B cell (primary cell): ENCODE measurements at regions of chr1 and their contacts with region 1.

Region 1: DNA sequence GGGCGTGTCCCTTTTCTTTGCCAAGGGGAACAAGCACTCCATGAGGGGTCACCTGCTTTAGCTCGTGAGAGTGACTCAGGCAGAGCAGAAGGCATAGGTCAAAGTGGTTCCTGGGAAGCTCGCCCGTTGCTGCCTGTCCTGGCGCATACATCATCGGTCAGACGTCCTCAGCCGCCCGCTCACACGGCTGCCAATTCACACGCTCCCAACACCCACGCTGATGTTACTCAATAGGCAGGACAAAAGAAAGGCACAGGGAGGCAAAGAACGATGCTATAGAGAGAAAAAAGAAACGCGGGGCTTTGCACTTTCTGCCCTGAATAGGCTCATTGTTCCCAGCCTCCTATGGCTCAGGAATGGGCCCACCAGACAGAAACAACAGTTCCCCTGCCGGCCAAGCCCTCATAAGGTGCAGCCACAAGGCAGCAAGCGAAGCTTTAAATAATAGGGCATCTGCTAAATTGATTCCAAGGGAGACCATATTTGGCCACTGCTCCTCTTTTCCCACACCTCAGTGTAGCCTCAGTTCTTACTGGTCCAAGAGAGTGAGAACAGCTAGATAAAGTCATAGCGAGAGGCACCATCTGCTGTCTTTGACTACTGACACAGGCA is 38.7 kb downstream of the VTCN1 start:
- DNase-seq: no peak
- ATAC-seq: no peak
- H3K4me3 ChIP-seq: no peak overlapping the region
- H3K4me3 Mint-ChIP-seq: no peak overlapping the region
- H3K27ac ChIP-seq: no peak overlapping the region
- H3K27ac Mint-ChIP-seq: no peak overlapping the region
- H3K4me1 ChIP-seq: no peaks in the 10 kb centered on the region
- H3K4me1 Mint-ChIP-seq: no peaks in the 10 kb centered on the region
- H3K27me3 ChIP-seq: no peaks in the 10 kb centered on the region
- H3K27me3 Mint-ChIP-seq: peaks cover 4% of the 10 kb centered on the region
- CTCF ChIP-seq: no peak

Region 2: DNA sequence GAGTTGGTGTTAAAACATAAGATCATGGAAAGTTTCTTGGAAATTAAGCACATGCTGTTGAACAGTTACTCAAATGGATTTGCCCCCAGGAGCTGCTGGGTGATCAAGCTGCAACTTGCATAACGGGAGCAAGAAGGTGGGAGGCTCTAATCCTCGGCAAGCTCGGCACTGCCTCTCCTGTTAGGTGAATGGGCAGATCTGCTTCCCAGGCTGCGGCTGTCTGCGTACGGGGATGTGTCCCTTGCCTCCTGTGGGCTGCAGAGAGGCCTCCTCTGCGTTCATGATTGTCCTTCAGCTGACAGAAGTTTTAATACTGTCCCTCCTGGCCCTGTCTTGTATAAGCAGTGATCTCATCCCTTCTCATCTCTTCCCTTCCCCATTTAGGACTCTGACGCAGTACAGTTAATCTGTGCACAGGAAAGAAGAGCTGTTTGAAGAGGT is 762.2 kb before region 1 on chr1:
- CTCF ChIA-PET with region 1: no interaction called
- POLR2A ChIA-PET with region 1: no interaction called
- intact Hi-C with region 1: no loop called
- DNase-seq: no peak
- ATAC-seq: no peak
- H3K4me3 ChIP-seq: no peak overlapping the region
- H3K4me3 Mint-ChIP-seq: no peak overlapping the region
- H3K27ac ChIP-seq: no peak overlapping the region
- H3K27ac Mint-ChIP-seq: no peak overlapping the region
- H3K4me1 ChIP-seq: no peaks in the 10 kb centered on the region
- H3K4me1 Mint-ChIP-seq: peaks cover 3% of the 10 kb centered on the region
- H3K27me3 ChIP-seq: no peaks in the 10 kb centered on the region
- H3K27me3 Mint-ChIP-seq: no peaks in the 10 kb centered on the region
- CTCF ChIP-seq: no peak

Region 3: GRCh38 chr1:116806245-116806644 is 365.8 kb before region 1 on chr1:
- CTCF ChIA-PET with region 1: no interaction called
- POLR2A ChIA-PET with region 1: no interaction called
- intact Hi-C with region 1: no loop called
- DNase-seq: no peak
- ATAC-seq: no peak
- H3K4me3 ChIP-seq: no peak overlapping the region
- H3K4me3 Mint-ChIP-seq: no peak overlapping the region
- H3K27ac ChIP-seq: no peak overlapping the region
- H3K27ac Mint-ChIP-seq: no peak overlapping the region
- H3K4me1 ChIP-seq: no peaks in the 10 kb centered on the region
- H3K4me1 Mint-ChIP-seq: no peaks in the 10 kb centered on the region
- H3K27me3 ChIP-seq: no peaks in the 10 kb centered on the region
- H3K27me3 Mint-ChIP-seq: no peaks in the 10 kb centered on the region
- CTCF ChIP-seq: no peak

Region 4: DNA sequence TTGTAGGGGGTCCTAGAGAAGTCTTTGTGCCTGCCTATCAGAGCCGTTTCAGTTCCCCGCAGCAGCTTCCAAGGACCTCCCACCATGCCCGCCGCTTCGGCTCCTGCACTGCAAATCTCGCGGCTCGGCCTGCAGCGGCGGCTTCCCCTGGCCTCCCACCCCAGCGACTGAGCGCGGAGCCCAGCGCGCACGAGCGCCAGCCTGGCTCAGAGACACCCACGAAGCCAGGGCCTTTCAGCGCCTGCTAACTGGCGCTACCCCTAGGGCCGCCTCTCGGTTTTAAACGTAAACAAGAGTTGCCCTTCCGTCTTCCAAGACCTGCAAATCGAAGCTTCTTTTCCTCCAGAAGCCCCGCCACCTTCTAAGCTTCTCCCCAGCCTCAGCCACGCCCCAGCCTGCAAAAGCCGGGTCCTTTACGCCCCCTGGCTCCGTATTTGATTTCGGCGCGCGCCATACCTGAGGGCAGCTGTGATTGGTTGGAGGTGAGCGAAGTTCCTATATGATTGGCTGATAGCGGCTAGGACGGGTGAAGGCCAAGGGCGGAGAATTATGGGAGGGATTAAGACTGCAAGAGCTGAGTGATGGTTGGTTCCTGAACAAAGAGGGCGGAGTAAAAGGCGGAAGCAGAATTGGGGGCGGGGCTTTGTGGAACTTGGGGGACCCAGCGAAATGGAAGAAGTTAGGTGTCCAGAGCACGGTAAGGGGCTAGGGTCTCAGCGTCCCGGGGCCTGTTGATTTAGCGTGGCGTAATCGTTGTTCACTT is 112.1 kb before region 1 on chr1 and contains the start of gene TTF2:
- CTCF ChIA-PET with region 1: no interaction called
- POLR2A ChIA-PET with region 1: no interaction called
- intact Hi-C with region 1: no loop called
- DNase-seq: peak; percentile 98
- ATAC-seq: peak; percentile 96
- H3K4me3 ChIP-seq: peak within 1 kb of the TSS; percentile 71 to 95 (median 79)
- H3K4me3 Mint-ChIP-seq: no peak within 1 kb of the TSS
- H3K27ac ChIP-seq: peak within 1 kb of the TSS; percentile 69 to 76
- H3K27ac Mint-ChIP-seq: no peak within 1 kb of the TSS
- H3K4me1 ChIP-seq: peaks cover 14 to 17% of the 10 kb centered on the region in 2 donors
- H3K4me1 Mint-ChIP-seq: peaks cover 25% of the 10 kb centered on the region
- H3K27me3 ChIP-seq: no peaks in the 10 kb centered on the region
- H3K27me3 Mint-ChIP-seq: no peaks in the 10 kb centered on the region
- CTCF ChIP-seq: peak; percentile 5
- total RNA-seq, gene TTF2: 28.9 and 29.1 TPM in 2 replicates

Region 5: DNA sequence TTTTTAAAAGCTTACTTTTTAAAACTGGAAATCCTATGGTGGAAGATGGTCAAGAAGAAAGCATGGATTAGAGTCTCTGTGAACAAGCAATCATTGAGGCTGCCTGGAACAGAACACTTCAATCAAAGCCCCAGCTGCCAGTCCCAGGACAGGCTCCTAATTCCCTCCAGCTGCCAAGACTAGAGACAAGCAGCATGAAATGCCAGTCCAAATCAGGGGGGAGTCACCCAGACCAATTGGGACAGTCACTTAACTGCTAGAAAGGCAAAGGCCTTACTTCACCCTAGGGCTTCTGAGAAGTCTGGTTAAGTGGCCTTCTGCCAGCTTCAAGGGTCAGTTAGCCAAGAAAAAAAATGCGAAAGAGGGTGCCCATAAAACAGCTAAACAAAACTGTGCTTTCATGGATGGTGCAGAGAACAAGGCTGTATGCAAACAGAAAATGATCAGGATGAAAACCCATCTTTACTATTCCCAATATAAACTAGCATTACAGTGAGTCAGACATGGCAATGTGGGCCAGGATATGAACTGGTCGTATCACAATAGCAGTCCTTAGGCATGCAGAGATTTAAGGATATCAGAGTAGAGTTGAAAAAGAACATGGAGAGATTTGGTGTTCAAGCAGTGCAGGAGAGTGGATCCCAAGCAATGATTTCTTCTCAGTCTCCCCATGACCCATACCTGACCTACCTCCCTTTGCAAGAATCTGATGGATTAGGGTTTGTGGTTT is 164.2 kb after region 1 on chr1:
- CTCF ChIA-PET with region 1: no interaction called
- POLR2A ChIA-PET with region 1: interaction called, 10 read pairs
- intact Hi-C with region 1: no loop called
- DNase-seq: no peak
- ATAC-seq: no peak
- H3K4me3 ChIP-seq: no peak overlapping the region
- H3K4me3 Mint-ChIP-seq: no peak overlapping the region
- H3K27ac ChIP-seq: no peak overlapping the region
- H3K27ac Mint-ChIP-seq: no peak overlapping the region
- H3K4me1 ChIP-seq: no peaks in the 10 kb centered on the region
- H3K4me1 Mint-ChIP-seq: no peaks in the 10 kb centered on the region
- H3K27me3 ChIP-seq: no peaks in the 10 kb centered on the region
- H3K27me3 Mint-ChIP-seq: peaks cover 14% of the 10 kb centered on the region
- CTCF ChIP-seq: no peak